AG04449 (cell line): ENCODE measurements at regions of chr3 and their contacts with region 1.

Region 1: GRCh38 chr3:120417272-120417911 is 33.4 kb downstream of the FSTL1 start:
- DNase-seq: peak; percentile 94
- H3K4me3 ChIP-seq: 0 out of 2 replicates have a peak overlapping the region, but pooled peaks have one; percentile 28
- CTCF ChIP-seq: peak; percentile 70

Region 2: DNA sequence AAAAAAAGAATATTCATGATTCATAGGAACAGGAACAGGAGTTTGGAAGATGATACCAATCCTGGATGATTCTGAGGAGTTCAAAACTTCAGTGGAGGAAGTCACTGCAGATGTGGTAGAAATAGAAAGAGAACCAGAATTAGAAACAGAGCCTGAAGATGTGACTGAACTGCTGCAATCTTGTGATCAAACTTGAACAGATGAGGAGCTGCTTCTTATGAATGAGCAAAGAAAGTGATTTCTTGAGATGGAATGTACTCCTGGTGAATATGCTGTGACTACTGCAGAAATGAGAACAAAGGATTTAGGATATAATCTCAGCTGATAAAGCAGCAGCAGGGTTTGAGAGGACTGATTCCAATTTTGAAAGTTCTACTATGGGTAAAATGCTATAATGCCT is 395.9 kb before region 1 on chr3:
- CTCF ChIA-PET with region 1: no interaction called
- POLR2A ChIA-PET with region 1: no interaction called
- DNase-seq: no peak
- H3K4me3 ChIP-seq: no peak overlapping the region
- CTCF ChIP-seq: no peak

Region 3: GRCh38 chr3:120404876-120405275 is 12.5 kb before region 1 on chr3:
- CTCF ChIA-PET with region 1: interaction called, 57 read pairs
- POLR2A ChIA-PET with region 1: no interaction called
- DNase-seq: no peak
- H3K4me3 ChIP-seq: no peak overlapping the region
- CTCF ChIP-seq: no peak

Region 4: DNA sequence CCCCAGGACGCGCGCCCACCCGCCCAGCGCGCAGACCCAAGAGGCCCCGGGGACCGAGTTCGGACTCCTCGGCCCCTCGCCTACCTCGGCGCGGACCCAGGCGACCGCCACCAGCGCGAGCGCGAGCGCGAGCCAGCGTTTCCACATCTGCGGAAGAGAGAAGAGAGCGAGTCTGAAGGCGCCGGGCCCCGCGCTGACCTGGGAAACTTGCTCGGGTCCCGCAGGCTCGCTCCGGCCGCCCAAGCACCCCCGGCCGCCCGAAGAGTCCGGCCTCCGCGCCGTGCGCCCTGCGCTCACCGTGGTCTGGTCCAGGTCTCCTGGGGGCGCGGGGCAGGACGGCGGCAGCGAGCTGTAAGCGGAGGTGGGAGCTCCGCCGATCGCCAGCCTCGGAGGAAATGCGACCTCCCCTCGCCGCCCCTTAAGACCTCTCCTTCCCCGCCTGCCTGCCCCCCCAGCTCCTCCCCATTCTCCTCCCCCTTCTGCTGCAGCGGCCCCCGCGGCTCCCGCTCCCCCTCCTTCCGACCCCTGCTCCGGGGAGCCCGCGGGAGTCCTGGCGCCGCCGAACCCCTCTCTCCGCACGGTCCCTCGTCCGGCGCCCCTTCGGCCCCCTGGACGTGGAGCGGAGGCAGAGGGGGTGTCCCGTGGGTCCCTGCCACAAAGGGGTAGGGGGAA is 33.3 kb after region 1 on chr3 and contains the start of gene FSTL1:
- CTCF ChIA-PET with region 1: interaction called, 20 read pairs
- POLR2A ChIA-PET with region 1: interaction called, 6 read pairs
- DNase-seq: no peak
- H3K4me3 ChIP-seq: peak within 1 kb of the TSS; percentile 89
- CTCF ChIP-seq: no peak

Region 5: DNA sequence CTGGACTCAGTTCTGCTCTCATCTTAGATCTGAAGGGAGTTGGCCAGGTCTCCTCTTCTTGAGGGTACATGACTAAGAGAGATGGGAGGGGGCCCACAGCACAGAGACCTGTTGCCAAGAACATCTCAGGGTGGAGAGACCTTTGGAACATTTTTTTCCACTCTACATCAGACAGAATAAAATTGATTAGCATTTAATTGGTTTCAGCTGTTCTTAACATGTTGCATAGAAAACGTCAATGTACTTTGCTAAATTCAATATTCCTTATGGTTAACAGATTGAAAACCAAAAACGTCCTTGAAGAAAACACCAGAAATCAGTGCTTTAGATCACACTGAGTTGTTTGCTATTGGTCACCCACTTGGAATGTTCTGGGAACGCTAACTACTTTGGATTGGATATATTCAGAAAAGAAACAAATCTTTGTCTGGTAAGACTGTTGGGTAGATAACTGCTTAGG is 69.8 kb after region 1 on chr3:
- CTCF ChIA-PET with region 1: no interaction called
- POLR2A ChIA-PET with region 1: no interaction called
- DNase-seq: no peak
- H3K4me3 ChIP-seq: no peak overlapping the region
- CTCF ChIP-seq: no peak

Region 6: DNA sequence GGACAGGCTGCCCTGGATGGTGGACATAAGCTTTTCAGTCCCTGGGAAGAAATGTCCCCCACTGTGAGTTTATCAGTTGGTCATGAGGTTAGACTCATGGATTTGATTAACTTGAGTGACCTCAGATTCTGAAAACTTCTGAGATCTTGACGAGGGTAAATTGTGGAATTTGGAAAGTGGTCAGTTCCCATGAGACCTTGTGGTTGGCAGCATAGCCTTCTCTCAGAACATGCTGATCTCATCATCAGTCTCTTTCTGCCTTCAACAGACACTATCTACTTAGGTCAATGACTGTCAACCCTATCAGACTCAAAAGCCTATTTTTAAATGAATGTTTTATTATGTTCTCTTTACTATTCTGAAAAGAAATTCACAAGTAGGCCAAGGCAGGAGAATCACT is 133.2 kb after region 1 on chr3:
- CTCF ChIA-PET with region 1: interaction called, 244 read pairs
- POLR2A ChIA-PET with region 1: no interaction called
- DNase-seq: peak; percentile 26
- H3K4me3 ChIP-seq: no peak overlapping the region
- CTCF ChIP-seq: no peak

Region 7: GRCh38 chr3:120730576-120731542 is 313.5 kb after region 1 on chr3:
- CTCF ChIA-PET with region 1: no interaction called
- POLR2A ChIA-PET with region 1: no interaction called
- DNase-seq: no peak
- H3K4me3 ChIP-seq: no peak overlapping the region
- CTCF ChIP-seq: no peak